ENCODE measurements at regions of chr2 and their contacts with region 1.

Region 1: DNA sequence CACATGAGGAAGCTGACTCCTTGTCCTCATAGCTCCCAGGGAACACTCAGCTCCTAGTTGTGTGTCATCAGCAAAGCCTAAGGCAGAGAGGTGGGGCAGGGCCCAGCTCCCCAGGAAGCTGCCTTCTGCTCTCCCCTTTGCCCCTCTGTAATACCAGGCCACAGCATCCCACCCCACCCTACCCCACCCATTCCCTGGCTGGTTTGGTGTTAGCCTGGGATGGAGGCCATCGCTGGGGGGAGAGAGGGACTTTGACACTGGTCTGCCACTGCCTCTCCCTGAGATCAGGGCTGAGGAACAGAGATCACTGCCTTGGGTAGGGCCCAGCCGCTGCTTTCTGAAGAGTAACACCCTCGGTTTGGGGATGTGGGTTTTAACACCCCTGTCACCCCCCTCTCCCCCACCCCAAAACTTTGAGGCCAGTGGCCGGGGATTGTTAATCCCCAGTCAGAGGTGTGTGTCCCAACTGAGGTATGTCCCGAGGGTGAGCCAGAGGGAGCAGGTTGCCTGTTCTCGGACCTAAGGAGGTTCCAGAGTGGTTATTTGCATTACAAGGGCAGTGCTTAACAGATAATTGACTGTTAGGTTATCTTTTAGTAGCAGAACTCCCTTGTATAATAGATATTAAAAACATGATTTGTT is 41.4 kb downstream of the TET3 start:
- H3K4me3 Mint-ChIP-seq: peak overlapping the region; percentile 2
- H3K27ac Mint-ChIP-seq: peak overlapping the region; percentile 87
- H3K4me1 Mint-ChIP-seq: peaks cover 76% of the 10 kb centered on the region
- H3K27me3 Mint-ChIP-seq: no peaks in the 10 kb centered on the region

Region 2: GRCh38 chr2:73324126-73324725 is 701.9 kb before region 1 on chr2:
- intact Hi-C with region 1: no loop called
- H3K4me3 Mint-ChIP-seq: no peak overlapping the region
- H3K27ac Mint-ChIP-seq: no peak overlapping the region
- H3K4me1 Mint-ChIP-seq: no peaks in the 10 kb centered on the region
- H3K27me3 Mint-ChIP-seq: peaks cover 21% of the 10 kb centered on the region

Region 3: GRCh38 chr2:74079522-74080341 is 53.6 kb after region 1 on chr2:
- intact Hi-C with region 1: loop called (anchors 5 kb)
- H3K4me3 Mint-ChIP-seq: peak overlapping the region; percentile 69
- H3K27ac Mint-ChIP-seq: peak overlapping the region; percentile 86
- H3K4me1 Mint-ChIP-seq: peaks cover 64% of the 10 kb centered on the region
- H3K27me3 Mint-ChIP-seq: no peaks in the 10 kb centered on the region

Measured in dendritic cell treated with granulocyte-macrophage colony-stimulating factor and Interleukin-4, amounts not matched to agents 40 ng/mL and 50 ng/mL, for 4 days (primary cell).